ENCODE measurements at regions of chr12 and their contacts with region 1.

Region 1: GRCh38 chr12:40622246-40622838 is 69.9 kb upstream of the CNTN1 start:
- DNase-seq: peak; percentile 5 to 16
- ATAC-seq: no peak
- H3K4me3 ChIP-seq: no peak overlapping the region
- H3K27ac ChIP-seq: no peak overlapping the region
- H3K4me1 ChIP-seq: no peaks in the 10 kb centered on the region
- H3K27me3 ChIP-seq: peaks cover 0 to 2% (median 0%) of the 10 kb centered on the region in 7 donors
- CTCF ChIP-seq: peak; percentile 15 to 75 (median 61)

Region 2: GRCh38 chr12:40911676-40912075 is 289.3 kb after region 1 on chr12:
- intact Hi-C with region 1: loop called in 1 of 10 experiments (anchors 5 kb)
- DNase-seq: no peak
- ATAC-seq: no peak
- H3K4me3 ChIP-seq: no peak overlapping the region
- H3K27ac ChIP-seq: no peak overlapping the region
- H3K4me1 ChIP-seq: no peaks in the 10 kb centered on the region
- H3K27me3 ChIP-seq: no peaks in the 10 kb centered on the region
- CTCF ChIP-seq: no peak

Region 3: GRCh38 chr12:40921563-40922163 is 299.3 kb after region 1 on chr12:
- intact Hi-C with region 1: loop called in 2 of 10 experiments (anchors 5 kb)
- DNase-seq: no peak
- ATAC-seq: no peak
- H3K4me3 ChIP-seq: no peak overlapping the region
- H3K27ac ChIP-seq: no peak overlapping the region
- H3K4me1 ChIP-seq: no peaks in the 10 kb centered on the region
- H3K27me3 ChIP-seq: peaks cover 0 to 5% (median 0%) of the 10 kb centered on the region in 7 donors
- CTCF ChIP-seq: peak; percentile 21 to 72 (median 62)

Region 4: GRCh38 chr12:40937891-40938290 is 315.5 kb after region 1 on chr12:
- intact Hi-C with region 1: loop called in 1 of 10 experiments (anchors 5 kb)
- DNase-seq: no peak
- ATAC-seq: no peak
- H3K4me3 ChIP-seq: no peak overlapping the region
- H3K27ac ChIP-seq: no peak overlapping the region
- H3K4me1 ChIP-seq: no peaks in the 10 kb centered on the region
- H3K27me3 ChIP-seq: no peaks in the 10 kb centered on the region
- CTCF ChIP-seq: no peak